ENCODE measurements at regions of chr19 and their contacts with region 1.

Region 1: GRCh38 chr19:9507285-9507684 is 8.9 kb upstream of the ZNF560 start:
- DNase-seq: no peak
- H3K4me3 ChIP-seq: no peak overlapping the region
- H3K27ac ChIP-seq: no peak overlapping the region
- H3K4me1 ChIP-seq: no peaks in the 10 kb centered on the region
- H3K27me3 ChIP-seq: no peaks in the 10 kb centered on the region
- CTCF ChIP-seq: no peak
- POLR2A ChIP-seq: no peak

Region 2: DNA sequence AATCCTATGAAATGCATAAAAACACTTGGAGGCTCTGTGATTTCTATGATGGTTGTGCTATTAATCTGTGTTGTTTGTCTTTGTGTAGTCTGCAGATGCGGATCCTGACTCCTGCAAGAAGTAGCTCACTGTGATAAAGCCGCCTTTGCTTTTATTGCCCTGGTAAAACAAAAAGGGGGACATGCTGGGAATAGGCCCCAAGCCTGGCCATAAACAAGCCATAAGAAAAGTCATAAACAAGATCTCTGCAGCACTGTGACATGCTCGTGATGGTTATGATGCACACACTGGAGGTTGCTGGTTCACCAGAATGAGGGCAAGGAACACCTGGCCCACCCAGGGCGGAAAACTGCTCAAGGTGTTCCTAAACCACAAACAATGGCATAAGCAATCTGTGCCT is 45.3 kb before region 1 on chr19:
- intact Hi-C with region 1: loop called (anchors 2 kb)
- DNase-seq: no peak
- H3K4me3 ChIP-seq: no peak overlapping the region
- H3K27ac ChIP-seq: no peak overlapping the region
- H3K4me1 ChIP-seq: no peaks in the 10 kb centered on the region
- H3K27me3 ChIP-seq: no peaks in the 10 kb centered on the region
- CTCF ChIP-seq: no peak
- POLR2A ChIP-seq: no peak

Measured in testis (tissue), 5 donors.